CD8-positive, alpha-beta T cell (primary cell): ENCODE measurements at regions of chr19 and their contacts with region 1.

Region 1: DNA sequence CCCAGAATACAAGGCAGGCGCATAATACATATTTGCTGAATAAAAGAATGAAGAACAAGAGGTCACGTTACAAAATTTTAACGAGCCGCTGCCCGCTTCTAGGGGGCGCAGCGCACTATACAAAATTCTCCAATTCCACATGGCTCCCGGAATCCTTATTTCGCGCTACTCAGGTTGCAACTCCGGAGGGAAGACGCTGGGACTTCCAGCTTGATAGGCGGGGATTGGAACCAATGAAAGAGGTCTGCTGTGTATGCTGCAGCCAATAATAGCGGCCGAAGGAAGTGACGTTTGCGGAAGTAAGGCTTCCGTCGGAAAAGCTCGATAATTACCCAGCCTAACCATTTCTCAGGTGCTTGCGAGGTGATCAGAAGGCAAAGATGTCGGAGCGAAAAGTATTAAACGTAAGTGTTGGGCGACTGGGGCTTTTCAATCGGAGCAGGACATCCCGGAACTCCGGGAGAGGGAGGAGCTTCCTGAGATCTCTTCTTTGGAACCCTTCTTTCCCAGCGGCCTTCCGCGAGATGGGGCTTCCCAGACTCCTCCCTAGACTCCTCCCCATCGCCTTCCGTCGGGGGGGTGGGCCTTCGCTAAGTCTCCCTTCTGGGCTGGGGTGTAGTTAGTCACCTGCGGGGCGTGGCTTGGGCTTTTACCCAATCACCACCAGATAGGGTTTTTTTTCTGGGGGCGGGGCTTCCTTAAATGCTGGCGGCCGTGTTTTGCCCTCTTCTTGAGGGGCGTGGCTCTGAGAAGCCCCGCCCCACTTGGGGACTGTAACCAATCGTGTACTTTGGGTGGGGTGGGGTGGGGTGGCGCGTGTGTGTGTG is at the start of gene YJU2:
- DNase-seq: peak; percentile 91 to 100 (median 98)
- ATAC-seq: peak; percentile 95
- H3K4me3 ChIP-seq: peak within 1 kb of the TSS; percentile 82 to 87
- H3K4me3 Mint-ChIP-seq: peak within 1 kb of the TSS; percentile 93
- H3K27ac ChIP-seq: peak within 1 kb of the TSS; percentile 96 to 100
- H3K27ac Mint-ChIP-seq: peak within 1 kb of the TSS; percentile 99
- H3K4me1 ChIP-seq: peaks cover 19% of the 10 kb centered on the region
- H3K4me1 Mint-ChIP-seq: peaks cover 22% of the 10 kb centered on the region
- H3K27me3 ChIP-seq: no peaks in the 10 kb centered on the region
- H3K27me3 Mint-ChIP-seq: peaks cover 2% of the 10 kb centered on the region
- CTCF ChIP-seq: peak; percentile 68
- total RNA-seq, gene YJU2: 53.9 to 61.6 TPM

Region 2: GRCh38 chr19:2923510-2923909 is 1323.5 kb before region 1 on chr19:
- CTCF ChIA-PET with region 1: no interaction called
- POLR2A ChIA-PET with region 1: no interaction called
- intact Hi-C with region 1: no loop called
- DNase-seq: no peak
- ATAC-seq: no peak
- H3K4me3 ChIP-seq: no peak overlapping the region
- H3K4me3 Mint-ChIP-seq: no peak overlapping the region
- H3K27ac ChIP-seq: no peak overlapping the region
- H3K27ac Mint-ChIP-seq: no peak overlapping the region
- H3K4me1 ChIP-seq: no peaks in the 10 kb centered on the region
- H3K4me1 Mint-ChIP-seq: no peaks in the 10 kb centered on the region
- H3K27me3 ChIP-seq: no peaks in the 10 kb centered on the region
- H3K27me3 Mint-ChIP-seq: no peaks in the 10 kb centered on the region
- CTCF ChIP-seq: no peak

Region 3: GRCh38 chr19:4007021-4007835 is 239.8 kb before region 1 on chr19 and contains the start of gene PIAS4:
- CTCF ChIA-PET with region 1: no interaction called
- POLR2A ChIA-PET with region 1: no interaction called
- intact Hi-C with region 1: loop called in 1 of 2 experiments (anchors 1 kb)
- DNase-seq: peak; percentile 89 to 99 (median 96)
- ATAC-seq: peak; percentile 91
- H3K4me3 ChIP-seq: peak within 1 kb of the TSS; percentile 68 to 87
- H3K4me3 Mint-ChIP-seq: peak within 1 kb of the TSS; percentile 83
- H3K27ac ChIP-seq: peak within 1 kb of the TSS; percentile 46 to 58
- H3K27ac Mint-ChIP-seq: peak within 1 kb of the TSS; percentile 84
- H3K4me1 ChIP-seq: peaks cover 38% of the 10 kb centered on the region
- H3K4me1 Mint-ChIP-seq: peaks cover 24% of the 10 kb centered on the region
- H3K27me3 ChIP-seq: no peaks in the 10 kb centered on the region
- H3K27me3 Mint-ChIP-seq: no peaks in the 10 kb centered on the region
- CTCF ChIP-seq: no peak
- total RNA-seq, gene PIAS4: 11.6 to 14.9 TPM

Region 4: GRCh38 chr19:4108767-4109625 is 138.0 kb before region 1 on chr19:
- CTCF ChIA-PET with region 1: no interaction called
- POLR2A ChIA-PET with region 1: no interaction called
- intact Hi-C with region 1: loop called in 1 of 2 experiments (anchors 2 kb)
- DNase-seq: peak; percentile 59 to 96 (median 83)
- ATAC-seq: peak; percentile 55
- H3K4me3 ChIP-seq: peak overlapping the region in 1 of 2 experiments; percentile 22
- H3K4me3 Mint-ChIP-seq: peak overlapping the region; percentile 60
- H3K27ac ChIP-seq: peak overlapping the region; percentile 73 to 74
- H3K27ac Mint-ChIP-seq: peak overlapping the region; percentile 99
- H3K4me1 ChIP-seq: peaks cover 60% of the 10 kb centered on the region
- H3K4me1 Mint-ChIP-seq: peaks cover 68% of the 10 kb centered on the region
- H3K27me3 ChIP-seq: no peaks in the 10 kb centered on the region
- H3K27me3 Mint-ChIP-seq: no peaks in the 10 kb centered on the region
- CTCF ChIP-seq: no peak

Region 5: GRCh38 chr19:4154571-4155312 is 92.2 kb before region 1 on chr19:
- CTCF ChIA-PET with region 1: no interaction called
- POLR2A ChIA-PET with region 1: no interaction called
- intact Hi-C with region 1: no loop called
- DNase-seq: no peak
- ATAC-seq: no peak
- H3K4me3 ChIP-seq: no peak overlapping the region
- H3K4me3 Mint-ChIP-seq: no peak overlapping the region
- H3K27ac ChIP-seq: no peak overlapping the region
- H3K27ac Mint-ChIP-seq: no peak overlapping the region
- H3K4me1 ChIP-seq: no peaks in the 10 kb centered on the region
- H3K4me1 Mint-ChIP-seq: peaks cover 3% of the 10 kb centered on the region
- H3K27me3 ChIP-seq: no peaks in the 10 kb centered on the region
- H3K27me3 Mint-ChIP-seq: peaks cover under 1% of the 10 kb centered on the region
- CTCF ChIP-seq: no peak

Region 6: DNA sequence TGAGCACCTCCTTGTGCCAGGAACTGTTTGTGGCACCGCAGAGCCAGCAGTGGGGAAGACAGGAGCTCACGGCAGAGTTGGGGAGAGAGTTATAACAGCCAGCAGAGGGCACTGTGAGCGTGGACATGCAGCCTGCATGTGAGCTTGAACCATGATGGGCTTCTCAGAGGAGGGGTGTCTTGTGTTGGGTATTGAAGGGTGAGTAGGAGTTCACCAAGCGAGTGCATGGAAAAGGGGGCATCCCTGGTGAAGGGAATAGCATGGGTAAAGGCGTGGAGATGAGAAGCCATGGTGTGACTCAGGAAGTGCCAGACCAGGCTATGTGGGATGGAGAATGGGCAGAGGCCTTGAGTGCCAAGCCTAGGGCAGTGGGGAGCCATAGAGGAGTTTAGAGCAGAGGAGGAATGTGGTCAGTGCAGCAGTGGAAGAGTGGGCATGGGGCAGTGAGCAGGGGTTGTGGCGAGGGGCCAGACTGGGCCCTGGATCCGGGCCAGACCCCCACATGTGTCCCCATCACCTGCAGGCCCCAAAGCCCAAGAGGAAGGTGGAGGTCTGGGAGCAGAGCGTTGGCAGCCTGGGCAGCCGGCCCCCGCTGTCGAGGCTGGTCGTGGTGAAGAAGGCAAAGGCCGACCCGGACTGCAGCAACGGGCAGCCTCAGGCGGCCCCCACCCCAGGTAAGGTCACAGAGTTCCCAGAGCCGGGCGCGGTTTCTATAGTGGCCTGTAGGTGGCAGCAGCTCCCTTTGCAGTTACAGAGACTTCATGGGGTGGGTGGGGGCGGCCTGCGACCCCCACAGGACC is 20.3 kb after region 1 on chr19:
- CTCF ChIA-PET with region 1: interaction called, 22 read pairs
- POLR2A ChIA-PET with region 1: no interaction called
- intact Hi-C with region 1: no loop called
- DNase-seq: peak; percentile 37 to 76 (median 65)
- ATAC-seq: peak; percentile 70
- H3K4me3 ChIP-seq: no peak overlapping the region
- H3K4me3 Mint-ChIP-seq: no peak overlapping the region
- H3K27ac ChIP-seq: no peak overlapping the region
- H3K27ac Mint-ChIP-seq: peak overlapping the region; percentile 23
- H3K4me1 ChIP-seq: peaks cover 15% of the 10 kb centered on the region
- H3K4me1 Mint-ChIP-seq: peaks cover 25% of the 10 kb centered on the region
- H3K27me3 ChIP-seq: no peaks in the 10 kb centered on the region
- H3K27me3 Mint-ChIP-seq: no peaks in the 10 kb centered on the region
- CTCF ChIP-seq: peak; percentile 82

Region 7: DNA sequence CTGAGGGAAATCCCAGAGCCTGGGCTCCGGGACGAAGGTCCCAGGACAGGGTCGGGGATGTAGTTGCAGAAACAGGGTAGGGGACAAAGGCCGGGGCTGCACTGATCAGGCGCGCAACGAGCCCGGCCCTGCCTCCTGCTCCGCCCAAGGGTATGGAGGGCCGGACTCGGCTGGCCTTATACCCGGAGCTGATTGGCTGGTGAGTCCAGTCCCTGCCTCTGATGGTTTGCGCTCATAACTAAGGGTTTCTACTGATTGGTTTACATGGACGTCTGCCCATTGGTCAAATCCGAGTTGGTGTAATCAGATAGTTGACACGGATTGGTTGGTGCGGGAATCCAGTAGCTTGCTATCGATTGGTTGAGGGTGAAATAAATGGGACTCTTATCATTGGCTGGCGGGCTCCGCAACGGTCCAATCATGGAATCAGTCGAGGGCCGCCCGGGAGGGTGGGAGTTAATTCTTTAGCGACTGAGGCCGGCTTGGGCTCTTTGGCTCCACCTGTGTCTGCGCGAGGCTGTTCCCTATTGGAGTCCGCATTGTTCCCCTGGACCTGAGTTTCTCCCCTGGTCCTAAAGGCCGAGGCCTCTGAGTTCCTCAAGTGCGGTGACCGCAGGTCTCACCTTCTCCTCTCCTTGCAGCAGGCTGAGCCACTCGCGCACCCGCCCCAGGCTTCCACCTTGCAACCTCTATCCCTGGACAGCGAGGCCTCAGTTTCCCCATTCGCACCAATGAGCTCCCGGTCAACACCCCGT is 95.8 kb after region 1 on chr19:
- CTCF ChIA-PET with region 1: interaction called, 4 read pairs
- POLR2A ChIA-PET with region 1: interaction called, 17 read pairs
- intact Hi-C with region 1: loop called (anchors 1 kb)
- DNase-seq: peak; percentile 80 to 99 (median 87)
- ATAC-seq: peak; percentile 78
- H3K4me3 ChIP-seq: peak overlapping the region; percentile 72 to 100
- H3K4me3 Mint-ChIP-seq: peak overlapping the region; percentile 92
- H3K27ac ChIP-seq: peak overlapping the region; percentile 81 to 83
- H3K27ac Mint-ChIP-seq: peak overlapping the region; percentile 91
- H3K4me1 ChIP-seq: peaks cover 20% of the 10 kb centered on the region
- H3K4me1 Mint-ChIP-seq: peaks cover 36% of the 10 kb centered on the region
- H3K27me3 ChIP-seq: no peaks in the 10 kb centered on the region
- H3K27me3 Mint-ChIP-seq: no peaks in the 10 kb centered on the region
- CTCF ChIP-seq: no peak

Region 8: GRCh38 chr19:4457654-4458395 is 210.8 kb after region 1 on chr19 and contains the start of gene UBXN6:
- CTCF ChIA-PET with region 1: interaction called, 4 read pairs
- POLR2A ChIA-PET with region 1: no interaction called
- intact Hi-C with region 1: loop called (anchors 1 kb)
- DNase-seq: peak; percentile 95 to 99 (median 97)
- ATAC-seq: peak; percentile 96
- H3K4me3 ChIP-seq: peak within 1 kb of the TSS; percentile 47 to 70
- H3K4me3 Mint-ChIP-seq: peak within 1 kb of the TSS; percentile 89
- H3K27ac ChIP-seq: peak within 1 kb of the TSS; percentile 63 to 73
- H3K27ac Mint-ChIP-seq: peak within 1 kb of the TSS; percentile 92
- H3K4me1 ChIP-seq: peaks cover 12% of the 10 kb centered on the region
- H3K4me1 Mint-ChIP-seq: peaks cover 18% of the 10 kb centered on the region
- H3K27me3 ChIP-seq: no peaks in the 10 kb centered on the region
- H3K27me3 Mint-ChIP-seq: no peaks in the 10 kb centered on the region
- CTCF ChIP-seq: no peak
- total RNA-seq, gene UBXN6: 61.5 to 62.6 TPM